ENCODE measurements at regions of chr5 and their contacts with region 1.

Region 1: GRCh38 chr5:149485655-149486425 is 65.4 kb downstream of the CSNK1A1 start:
- DNase-seq: peak in 4 of 5 donors; percentile 88 to 94 (median 90)
- ATAC-seq: peak; percentile 84 to 91 (median 88)
- H3K4me3 ChIP-seq: no peak overlapping the region
- H3K27ac ChIP-seq: peak overlapping the region; percentile 64 to 98 (median 88)
- H3K4me1 ChIP-seq: peaks cover 0 to 61% (median 42%) of the 10 kb centered on the region in 12 donors
- H3K27me3 ChIP-seq: no peaks in the 10 kb centered on the region
- CTCF ChIP-seq: no peak
- POLR2A ChIP-seq: no peak

Region 2: GRCh38 chr5:149429839-149430721 is 55.8 kb before region 1 on chr5:
- intact Hi-C with region 1: no loop called
- DNase-seq: peak in 4 of 5 donors; percentile 70 to 86 (median 76)
- ATAC-seq: peak; percentile 13 to 57 (median 39)
- H3K4me3 ChIP-seq: peak overlapping the region in 3 of 12 donors; percentile 17 to 26 (median 26)
- H3K27ac ChIP-seq: peak overlapping the region; percentile 68 to 97 (median 84)
- H3K4me1 ChIP-seq: peaks cover 5 to 72% (median 38%) of the 10 kb centered on the region in 12 donors
- H3K27me3 ChIP-seq: no peaks in the 10 kb centered on the region
- CTCF ChIP-seq: peak in 8 of 12 donors; percentile 17 to 51 (median 32)
- POLR2A ChIP-seq: no peak

Region 3: DNA sequence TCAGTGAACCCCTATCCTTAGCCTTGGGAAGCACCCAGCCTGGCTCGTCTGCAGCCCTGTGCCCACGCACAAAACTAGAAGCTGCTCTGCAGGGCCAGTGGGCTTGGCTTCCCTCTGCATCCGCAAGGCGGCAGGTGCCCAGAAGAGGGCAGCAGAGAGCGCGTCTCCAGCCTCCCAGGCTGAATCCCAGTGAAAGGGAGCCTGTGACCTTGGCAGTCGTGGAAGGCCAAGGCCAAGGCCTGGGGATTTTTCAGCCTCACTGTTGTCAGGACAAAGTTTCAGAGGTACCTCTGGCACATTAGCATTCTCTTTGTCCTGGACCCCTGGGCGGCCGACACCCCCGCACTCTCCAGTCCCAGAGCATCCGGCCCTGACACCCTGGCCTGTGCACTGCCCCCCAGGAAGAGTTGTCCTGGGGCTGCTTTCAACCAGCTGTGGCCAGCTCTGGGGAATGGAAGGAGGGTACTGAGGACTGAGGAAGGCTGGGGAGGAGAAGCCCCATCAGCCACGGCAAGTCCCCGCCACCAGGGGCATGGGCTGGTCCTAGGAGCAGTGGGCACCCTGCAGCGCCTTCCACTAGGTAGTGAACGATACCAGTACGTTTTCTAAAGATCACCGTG is 43.2 kb before region 1 on chr5:
- intact Hi-C with region 1: loop called in 6 of 10 experiments (anchors 5 kb)
- DNase-seq: peak; percentile 81 to 90 (median 85)
- ATAC-seq: peak; percentile 79 to 90 (median 86)
- H3K4me3 ChIP-seq: no peak overlapping the region
- H3K27ac ChIP-seq: peak overlapping the region; percentile 70 to 96 (median 85)
- H3K4me1 ChIP-seq: peaks cover 0 to 42% (median 21%) of the 10 kb centered on the region in 12 donors
- H3K27me3 ChIP-seq: no peaks in the 10 kb centered on the region
- CTCF ChIP-seq: peak; percentile 90 to 96 (median 93)
- POLR2A ChIP-seq: no peak

Region 4: DNA sequence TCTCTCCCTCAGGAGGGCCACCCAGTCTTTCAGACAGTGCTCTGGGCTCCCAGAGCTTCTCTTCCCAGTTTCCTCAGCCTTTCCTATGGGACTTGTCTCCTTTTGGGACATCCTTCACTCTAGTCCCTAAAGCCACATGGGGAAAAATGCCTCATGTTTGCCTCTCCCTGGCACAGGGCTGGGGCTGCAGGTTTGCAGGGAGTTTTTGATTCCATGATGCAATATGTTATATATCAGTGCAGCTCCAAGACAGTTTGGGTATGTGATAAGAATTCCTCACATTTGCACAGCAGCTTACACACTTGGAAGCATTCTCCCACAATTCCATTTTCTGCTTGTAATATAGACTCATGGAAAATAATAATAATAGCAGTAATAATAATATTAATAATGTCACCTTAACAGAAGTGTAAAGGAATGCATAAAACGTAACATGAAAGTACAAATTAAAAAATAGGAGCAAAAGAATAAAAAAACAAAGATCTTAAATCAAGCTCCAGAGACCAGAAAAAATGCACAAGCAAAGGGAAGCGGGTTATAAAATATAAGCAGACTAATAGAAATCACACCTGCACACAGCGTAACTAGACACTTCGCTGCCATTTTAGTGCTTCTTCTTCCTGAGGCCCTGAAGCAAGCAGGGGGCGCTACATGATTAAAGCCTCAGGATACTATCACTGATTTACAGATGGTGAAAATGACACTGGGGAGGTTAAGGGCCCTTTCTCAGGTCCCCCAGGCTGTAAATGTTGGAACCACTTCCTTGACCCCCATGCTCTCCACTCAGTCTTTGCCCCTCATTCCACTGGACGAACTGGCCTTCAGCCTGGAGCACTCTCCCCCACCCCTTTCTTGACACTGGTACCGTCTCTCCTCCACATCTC is 36.8 kb before region 1 on chr5:
- intact Hi-C with region 1: loop called in 8 of 10 experiments (anchors 5 kb)
- DNase-seq: no peak
- ATAC-seq: no peak
- H3K4me3 ChIP-seq: no peak overlapping the region
- H3K27ac ChIP-seq: peak overlapping the region in 11 of 12 donors; percentile 79 to 94 (median 89)
- H3K4me1 ChIP-seq: peaks cover 15 to 92% (median 67%) of the 10 kb centered on the region in 12 donors
- H3K27me3 ChIP-seq: no peaks in the 10 kb centered on the region
- CTCF ChIP-seq: peak in 6 of 12 donors; percentile 16 to 39 (median 30)
- POLR2A ChIP-seq: no peak

Region 5: DNA sequence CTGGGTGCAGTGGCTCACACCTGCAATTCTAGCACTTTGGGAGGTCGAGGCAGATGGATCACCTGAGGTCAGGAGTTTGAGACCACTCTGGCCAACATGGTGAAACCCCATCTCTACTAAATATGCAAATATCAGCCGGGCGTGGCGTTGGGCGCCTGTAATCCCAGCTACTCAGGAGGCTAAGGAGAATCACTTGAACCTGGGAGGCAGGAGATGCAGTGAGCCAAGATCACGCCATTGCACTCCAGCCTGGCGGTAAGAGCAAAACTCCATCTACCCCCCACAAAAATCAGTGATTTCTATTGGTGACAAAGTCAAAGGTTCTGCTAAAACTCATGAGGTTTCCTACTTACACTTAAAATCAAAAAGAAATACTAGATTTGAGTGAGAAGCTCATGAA is 46.6 kb after region 1 on chr5:
- intact Hi-C with region 1: loop called in 2 of 10 experiments (anchors 5 kb)
- DNase-seq: no peak
- ATAC-seq: no peak
- H3K4me3 ChIP-seq: no peak overlapping the region
- H3K27ac ChIP-seq: no peak overlapping the region
- H3K4me1 ChIP-seq: peaks cover 14 to 98% (median 81%) of the 10 kb centered on the region in 12 donors
- H3K27me3 ChIP-seq: no peaks in the 10 kb centered on the region
- CTCF ChIP-seq: no peak
- POLR2A ChIP-seq: no peak

Region 6: DNA sequence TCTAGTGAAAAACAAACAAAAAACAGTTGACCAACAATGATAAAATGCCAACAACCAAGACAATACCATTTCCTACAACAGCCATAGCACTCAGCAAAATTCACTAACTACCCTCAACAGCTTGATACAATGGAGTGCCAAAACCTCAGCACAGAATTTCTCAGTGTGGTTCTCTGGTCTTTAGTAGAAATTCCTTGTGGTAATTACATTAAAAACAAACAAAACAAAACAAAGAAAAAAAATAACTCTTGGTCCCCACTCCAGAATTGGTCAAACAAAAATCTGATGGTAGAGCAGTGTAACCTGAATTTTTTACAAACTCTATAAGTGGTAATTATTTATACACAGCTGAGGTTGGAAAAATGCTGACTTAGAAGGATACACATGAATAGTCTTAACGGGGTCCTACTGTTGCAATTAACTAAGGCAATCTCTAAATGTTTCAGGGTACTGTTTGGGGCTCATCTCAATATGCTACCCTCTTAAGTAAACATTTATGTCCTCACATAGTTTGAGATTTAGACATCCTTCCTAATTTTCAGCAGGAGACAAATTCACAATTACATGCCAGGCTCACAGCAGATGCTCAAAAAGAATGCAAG is 51.6 kb after region 1 on chr5:
- intact Hi-C with region 1: loop called in 4 of 10 experiments (anchors 5 to 10 kb)
- DNase-seq: no peak
- ATAC-seq: no peak
- H3K4me3 ChIP-seq: no peak overlapping the region
- H3K27ac ChIP-seq: no peak overlapping the region
- H3K4me1 ChIP-seq: peaks cover 9 to 96% (median 77%) of the 10 kb centered on the region in 12 donors
- H3K27me3 ChIP-seq: no peaks in the 10 kb centered on the region
- CTCF ChIP-seq: no peak
- POLR2A ChIP-seq: no peak

Region 7: GRCh38 chr5:151093476-151093889 is 1607.6 kb after region 1 on chr5:
- intact Hi-C with region 1: no loop called
- DNase-seq: no peak
- ATAC-seq: peak in 3 of 4 donors; percentile 19 to 50 (median 37)
- H3K4me3 ChIP-seq: no peak overlapping the region
- H3K27ac ChIP-seq: peak overlapping the region in 8 of 12 donors; percentile 30 to 85 (median 53)
- H3K4me1 ChIP-seq: peaks cover 14 to 78% (median 34%) of the 10 kb centered on the region in 12 donors
- H3K27me3 ChIP-seq: no peaks in the 10 kb centered on the region
- CTCF ChIP-seq: no peak
- POLR2A ChIP-seq: no peak